WTC11 (cell line): ENCODE measurements at regions of chr17 and their contacts with region 1.

Region 1: GRCh38 chr17:61221597-61222460 is 177.8 kb upstream of the TBX2 start:
- DNase-seq: no peak
- ATAC-seq: no peak
- H3K4me3 Mint-ChIP-seq: no peak overlapping the region
- H3K27ac Mint-ChIP-seq: no peak overlapping the region
- H3K4me1 Mint-ChIP-seq: peaks cover 21% of the 10 kb centered on the region
- H3K27me3 Mint-ChIP-seq: no peaks in the 10 kb centered on the region
- CTCF ChIP-seq: no peak

Region 2: DNA sequence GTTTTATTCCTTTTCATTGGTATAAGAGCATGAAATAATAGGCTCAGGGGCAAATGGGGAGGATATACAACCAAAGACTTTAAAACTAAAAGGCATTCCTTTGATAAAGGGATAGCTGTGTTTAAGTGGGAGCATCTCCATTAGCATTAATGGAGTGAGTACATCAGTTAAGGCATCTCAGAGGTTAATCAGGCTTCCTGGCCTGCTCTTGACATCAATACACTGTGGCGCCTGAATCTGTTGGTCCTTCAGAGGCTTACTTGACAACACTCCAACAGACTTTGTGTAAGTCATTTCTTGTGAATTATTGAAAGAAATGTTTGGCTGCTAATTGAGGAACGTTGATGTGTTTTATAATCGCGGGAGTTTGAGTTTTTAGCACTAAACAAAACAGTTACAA is 313.5 kb before region 1 on chr17:
- CTCF ChIA-PET with region 1: no interaction called
- POLR2A ChIA-PET with region 1: interaction called, 11 read pairs
- DNase-seq: no peak
- ATAC-seq: peak; percentile 38; the same call in 1 of the 2 replicates
- H3K4me3 Mint-ChIP-seq: no peak overlapping the region
- H3K27ac Mint-ChIP-seq: no peak overlapping the region
- H3K4me1 Mint-ChIP-seq: peaks cover 21% of the 10 kb centered on the region
- H3K27me3 Mint-ChIP-seq: no peaks in the 10 kb centered on the region
- CTCF ChIP-seq: no peak